Astrocyte of the cerebellum (primary cell): ENCODE measurements at regions of chr5 and their contacts with region 1.

Region 1: DNA sequence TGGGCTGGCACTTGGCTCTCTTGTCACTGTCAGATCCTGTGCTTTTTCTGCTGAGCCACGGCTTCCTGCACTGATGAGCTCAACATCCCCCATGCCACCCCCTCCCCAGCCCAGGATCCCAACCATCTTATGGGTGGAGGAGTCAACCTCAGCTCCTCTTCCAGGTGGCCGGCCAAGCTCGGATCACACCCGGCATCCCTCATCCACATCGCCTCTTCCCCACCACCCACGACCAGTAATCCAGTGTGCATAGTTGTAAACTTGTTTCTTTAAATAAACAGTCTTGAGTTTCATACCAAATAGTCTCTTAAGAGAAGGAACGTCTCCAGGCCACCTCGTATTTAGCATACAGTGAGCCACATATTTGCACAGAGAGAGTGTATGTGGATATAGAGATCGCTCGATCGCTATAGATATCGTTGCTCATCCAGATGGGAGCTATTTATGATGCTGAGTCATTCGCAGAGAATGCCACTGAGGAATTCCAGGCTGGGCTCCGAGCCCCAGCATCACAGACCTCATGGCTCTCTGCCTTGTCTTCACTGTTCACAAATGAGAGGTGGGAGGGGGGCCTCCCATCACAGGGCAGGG is 61.8 kb upstream of the CPLX2 start:
- DNase-seq: peak; percentile 72
- H3K4me3 ChIP-seq: no peak overlapping the region
- CTCF ChIP-seq: no peak

Region 2: DNA sequence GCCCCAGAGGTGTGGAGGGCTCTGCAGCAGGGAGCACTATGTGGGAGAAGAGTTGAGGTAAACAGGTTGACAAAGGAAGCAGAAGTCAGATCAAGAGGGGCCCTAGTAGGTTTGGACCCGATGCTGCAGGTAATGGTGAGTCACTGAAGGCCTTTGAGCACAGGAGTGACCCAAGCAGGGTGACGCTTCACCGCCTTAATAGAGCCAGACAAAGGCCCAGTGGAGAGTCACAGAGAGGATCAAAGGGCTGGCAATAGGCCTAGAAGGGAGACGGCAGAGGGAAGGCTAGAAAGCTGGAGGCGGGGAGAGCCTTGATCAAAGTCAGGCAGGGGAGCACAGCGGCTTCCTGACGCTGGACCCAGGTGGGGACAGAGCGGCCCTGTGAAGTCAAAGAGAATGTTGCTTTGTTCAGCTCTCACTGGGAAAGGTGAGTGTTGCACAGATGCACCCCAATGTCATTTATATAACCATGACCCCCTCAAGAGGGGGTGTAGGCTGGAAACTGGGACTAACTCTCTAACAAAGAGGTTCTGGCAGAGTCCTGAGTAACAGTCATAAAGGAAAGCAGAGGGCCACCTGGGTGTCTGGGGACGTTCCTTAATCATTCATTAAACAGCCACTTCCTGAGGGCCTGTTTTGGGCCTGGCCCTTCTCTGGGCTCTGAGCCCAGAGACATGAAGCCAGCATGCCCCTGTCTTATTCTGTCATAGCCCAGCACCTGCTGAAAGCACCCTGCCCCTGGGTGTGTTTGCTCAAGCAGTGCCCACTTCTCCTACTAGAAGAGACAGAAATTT is 51.9 kb after region 1 on chr5:
- in situ Hi-C with region 1: loop called (anchors 5 kb)
- DNase-seq: no peak
- H3K4me3 ChIP-seq: no peak overlapping the region
- CTCF ChIP-seq: no peak

Region 3: GRCh38 chr5:175885813-175886212 is 76.2 kb after region 1 on chr5:
- in situ Hi-C with region 1: no loop called
- DNase-seq: peak; percentile 13
- H3K4me3 ChIP-seq: no peak overlapping the region
- CTCF ChIP-seq: no peak